CD14-positive monocyte (primary cell): ENCODE measurements at regions of chr13 and their contacts with region 1.

Region 1: DNA sequence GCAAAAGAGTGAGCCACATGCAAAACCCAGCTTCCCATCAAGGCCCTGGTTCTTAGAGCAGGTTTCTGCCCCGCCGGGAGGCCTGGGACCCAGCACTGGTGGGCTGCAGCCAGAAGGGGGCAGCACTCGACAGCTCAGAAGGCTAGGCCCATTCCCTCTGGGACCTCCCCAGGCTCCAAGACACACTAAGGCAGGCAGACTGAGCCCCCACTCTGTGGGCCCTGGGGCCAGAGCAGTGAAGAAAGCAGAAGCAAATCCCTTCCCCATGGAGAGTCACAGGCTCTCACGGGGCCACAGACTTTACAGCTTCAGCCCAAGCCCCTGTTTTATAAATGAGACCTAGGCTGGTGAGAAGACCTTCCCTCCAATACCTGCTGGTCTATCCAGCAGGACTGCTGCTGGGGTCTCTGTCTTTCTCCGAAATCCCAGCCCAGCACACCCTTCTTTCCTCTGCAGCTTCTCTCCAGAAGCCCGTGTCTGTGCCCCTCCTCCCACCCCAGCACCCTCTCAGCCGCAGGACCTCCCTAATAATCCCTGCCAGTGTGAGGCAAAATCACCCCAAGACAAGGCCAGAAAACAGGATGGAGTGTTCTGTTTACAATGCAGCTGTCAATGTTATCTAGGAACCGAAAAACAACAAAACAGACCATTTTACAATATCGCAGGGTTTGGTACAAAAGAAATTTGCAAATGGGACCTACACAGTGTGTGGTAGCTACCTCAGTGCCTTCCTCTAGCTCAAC is 109.3 kb downstream of the ABCC4 start:
- DNase-seq: peak; percentile 53 to 61 (median 56)
- H3K4me3 ChIP-seq: no peak overlapping the region
- H3K4me3 Mint-ChIP-seq: no peak overlapping the region
- H3K27ac ChIP-seq: no peak overlapping the region
- H3K27ac Mint-ChIP-seq: no peak overlapping the region
- H3K4me1 ChIP-seq: no peaks in the 10 kb centered on the region
- H3K4me1 Mint-ChIP-seq: peaks cover 3% of the 10 kb centered on the region
- H3K27me3 ChIP-seq: no peaks in the 10 kb centered on the region
- H3K27me3 Mint-ChIP-seq: peaks cover 0 to 1% (median 1%) of the 10 kb centered on the region in 3 donors
- CTCF ChIP-seq: peak; percentile 81

Region 2: GRCh38 chr13:95403828-95404522 is 212.0 kb after region 1 on chr13:
- intact Hi-C with region 1: loop called (anchors 2 to 5 kb)
- DNase-seq: peak; percentile 68 to 76 (median 73)
- H3K4me3 ChIP-seq: peak overlapping the region; percentile 24 to 75 (median 31)
- H3K4me3 Mint-ChIP-seq: peak overlapping the region; percentile 81 to 98
- H3K27ac ChIP-seq: no peak overlapping the region
- H3K27ac Mint-ChIP-seq: peak overlapping the region in 1 of 7 donors; percentile 17
- H3K4me1 ChIP-seq: peaks cover 9 to 10% of the 10 kb centered on the region in 2 donors
- H3K4me1 Mint-ChIP-seq: peaks cover 13% of the 10 kb centered on the region
- H3K27me3 ChIP-seq: peaks cover 0 to 7% of the 10 kb centered on the region in 2 donors
- H3K27me3 Mint-ChIP-seq: peaks cover 7 to 12% (median 11%) of the 10 kb centered on the region in 3 donors
- CTCF ChIP-seq: peak; percentile 91